Dorsolateral prefrontal cortex (tissue), 120 donors: ENCODE measurements at regions of chr21 and their contacts with region 1.

Region 1: GRCh38 chr21:42593007-42593806 is 60.2 kb upstream of the PDE9A start:
- DNase-seq: peak in 9 of 10 donors; percentile 60 to 83 (median 73)
- H3K4me3 ChIP-seq: peak overlapping the region in 38 of 59 donors; percentile 0 to 48 (median 26)
- H3K27ac ChIP-seq: no peak overlapping the region
- H3K27me3 ChIP-seq: no peaks in the 10 kb centered on the region
- CTCF ChIP-seq: peak; percentile 43 to 90 (median 80)

Region 2: DNA sequence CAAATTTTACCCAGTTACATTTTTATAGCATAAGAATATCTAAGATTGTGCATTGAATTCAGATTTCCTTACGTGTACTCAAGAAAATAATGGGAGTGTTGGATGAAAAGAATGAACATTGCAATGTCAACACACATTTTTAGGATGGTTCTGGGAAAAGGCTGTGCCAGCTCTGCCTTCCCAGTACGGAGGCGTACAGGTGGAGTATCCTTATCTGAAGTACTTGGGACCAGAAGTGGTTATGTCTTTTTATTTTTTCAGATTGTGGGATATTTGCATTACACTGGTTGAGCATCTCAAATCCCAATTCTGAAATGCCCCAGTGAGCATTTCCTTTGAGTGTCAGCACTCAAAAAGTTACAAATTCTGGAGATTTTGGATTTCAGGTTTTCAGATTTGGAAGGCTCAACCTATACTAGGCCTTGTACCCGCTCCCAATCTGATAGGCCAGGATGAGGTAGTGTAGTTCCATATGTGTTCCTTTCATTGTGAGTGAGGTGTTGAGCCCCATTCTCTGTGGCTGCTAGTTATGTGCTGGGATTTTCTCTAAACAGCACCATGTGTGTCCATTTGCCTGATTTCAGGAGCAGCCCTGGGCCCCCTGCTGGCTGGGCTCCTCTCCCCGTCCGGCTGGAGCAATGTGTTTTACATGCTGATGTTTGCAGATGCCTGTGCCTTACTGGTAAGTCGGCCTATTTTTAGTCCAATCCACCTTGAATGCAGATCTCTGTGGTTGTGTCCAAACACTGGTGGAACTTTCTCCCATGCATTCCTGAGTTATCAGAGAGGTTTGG is 18.8 kb before region 1 on chr21:
- intact Hi-C with region 1: no loop called
- DNase-seq: peak in 5 of 10 donors; percentile 3 to 25 (median 14)
- H3K4me3 ChIP-seq: no peak overlapping the region
- H3K27ac ChIP-seq: no peak overlapping the region
- H3K27me3 ChIP-seq: no peaks in the 10 kb centered on the region
- CTCF ChIP-seq: peak in 2 of 56 donors; percentile 5 to 16

Region 3: DNA sequence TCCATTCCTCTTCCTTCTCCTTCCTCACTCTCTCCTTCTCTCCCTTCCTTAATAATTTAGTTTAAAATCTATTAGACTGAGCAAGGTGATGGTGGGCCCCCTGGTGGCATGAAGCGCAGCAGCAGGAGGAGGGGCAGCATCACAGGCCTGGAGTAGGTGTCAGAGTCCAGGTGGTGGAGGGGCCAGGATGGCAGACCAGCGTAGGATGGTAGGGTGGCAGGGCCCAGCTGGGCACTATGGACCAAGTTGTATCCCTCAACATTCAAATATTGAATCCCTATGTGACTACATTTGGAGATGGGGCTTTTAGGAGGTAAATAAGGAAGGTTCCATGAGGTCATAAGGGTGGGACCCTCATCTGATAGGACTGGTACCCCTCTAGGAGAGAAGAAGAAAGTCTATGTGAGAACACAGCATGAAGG is 225.1 kb after region 1 on chr21:
- intact Hi-C with region 1: loop called in 1 of 2 experiments (anchors 5 kb)
- DNase-seq: peak in 4 of 10 donors; percentile 28 to 63 (median 56)
- H3K4me3 ChIP-seq: no peak overlapping the region
- H3K27ac ChIP-seq: no peak overlapping the region
- H3K27me3 ChIP-seq: peaks cover 0 to 34% (median 0%) of the 10 kb centered on the region in 45 donors
- CTCF ChIP-seq: peak; percentile 31 to 86 (median 75)

Region 4: GRCh38 chr21:42833439-42833815 is 240.2 kb after region 1 on chr21:
- intact Hi-C with region 1: loop called in 1 of 2 experiments (anchors 5 kb)
- DNase-seq: peak in 2 of 10 donors; percentile 42 to 47
- H3K4me3 ChIP-seq: no peak overlapping the region
- H3K27ac ChIP-seq: no peak overlapping the region
- H3K27me3 ChIP-seq: peaks cover 0 to 26% (median 9%) of the 10 kb centered on the region in 45 donors
- CTCF ChIP-seq: peak in 29 of 56 donors; percentile 9 to 40 (median 22)